ENCODE measurements at regions of chr18 and their contacts with region 1.

Region 1: GRCh38 chr18:47748847-47749599 is 181.4 kb downstream of the SMAD2 start:
- DNase-seq: peak; percentile 73 to 82 (median 79)
- ATAC-seq: peak; percentile 99
- H3K4me3 ChIP-seq: no peak overlapping the region
- H3K27ac ChIP-seq: no peak overlapping the region
- H3K4me1 ChIP-seq: peaks cover 0 to 4% of the 10 kb centered on the region in 2 experiments; a peak in 2 of 5 replicates
- H3K27me3 ChIP-seq: peaks cover 0 to 6% of the 10 kb centered on the region in 2 experiments; a peak in 1 of 5 replicates
- CTCF ChIP-seq: peak; percentile 80 to 99 (median 99)
- EP300 ChIP-seq: no peak
- POLR2A ChIP-seq: no peak
- RAD21 ChIP-seq: peak; percentile 90 to 97

Region 2: GRCh38 chr18:47100214-47100831 is 648.7 kb before region 1 on chr18:
- CTCF ChIA-PET with region 1: interaction called, 7 read pairs
- POLR2A ChIA-PET with region 1: no interaction called
- in situ Hi-C with region 1: loop called (anchors 10 kb)
- intact Hi-C with region 1: no loop called
- DNase-seq: peak; percentile 41 to 65 (median 48)
- ATAC-seq: peak; percentile 93
- H3K4me3 ChIP-seq: no peak overlapping the region
- H3K27ac ChIP-seq: no peak overlapping the region
- H3K4me1 ChIP-seq: no peaks in the 10 kb centered on the region
- H3K27me3 ChIP-seq: no peaks in the 10 kb centered on the region
- CTCF ChIP-seq: peak; percentile 75 to 80 (median 79)
- EP300 ChIP-seq: no peak
- POLR2A ChIP-seq: no peak
- RAD21 ChIP-seq: peak; percentile 72 to 88

Region 3: DNA sequence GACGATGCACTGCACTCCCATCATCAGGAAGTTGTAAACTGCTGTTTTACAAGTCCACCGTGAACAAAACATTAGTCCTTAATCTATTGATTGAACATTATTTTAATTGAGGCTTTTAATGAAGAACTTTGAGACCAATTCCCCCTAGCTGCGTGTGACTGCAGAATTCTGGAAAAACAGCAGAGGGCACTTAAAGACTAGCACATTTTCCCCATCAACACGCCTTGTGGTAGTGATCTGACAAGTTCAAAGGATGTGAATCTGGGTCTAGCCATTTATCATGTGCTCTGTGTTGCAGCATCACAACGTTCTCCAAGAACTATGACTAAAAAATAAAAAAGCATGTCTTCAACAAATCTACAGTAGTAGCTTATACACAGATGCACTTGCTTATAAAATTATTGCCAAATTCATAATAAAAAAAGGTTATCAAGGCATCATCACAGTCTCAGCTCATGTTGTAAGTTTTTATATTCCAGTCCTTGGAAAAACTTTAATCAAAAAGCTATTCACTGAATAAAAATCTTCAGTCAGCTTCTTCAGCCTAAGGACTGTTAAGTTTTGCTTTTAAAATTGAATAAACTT is 533.4 kb before region 1 on chr18:
- CTCF ChIA-PET with region 1: interaction called, 25 read pairs
- POLR2A ChIA-PET with region 1: no interaction called
- in situ Hi-C with region 1: loop called (anchors 5 kb)
- intact Hi-C with region 1: loop called (anchors 2 kb)
- DNase-seq: peak; percentile 11 to 37 (median 14)
- ATAC-seq: peak; percentile 58; the same call in 1 of the 3 replicates
- H3K4me3 ChIP-seq: no peak overlapping the region
- H3K27ac ChIP-seq: no peak overlapping the region
- H3K4me1 ChIP-seq: no peaks in the 10 kb centered on the region
- H3K27me3 ChIP-seq: no peaks in the 10 kb centered on the region
- CTCF ChIP-seq: peak; percentile 58 to 72 (median 71)
- EP300 ChIP-seq: no peak
- POLR2A ChIP-seq: no peak
- RAD21 ChIP-seq: peak; percentile 68 to 80

Region 4: GRCh38 chr18:47595815-47596496 is 153.1 kb before region 1 on chr18:
- CTCF ChIA-PET with region 1: interaction called, 18 read pairs
- POLR2A ChIA-PET with region 1: no interaction called
- in situ Hi-C with region 1: loop called (anchors 10 kb)
- intact Hi-C with region 1: loop called (anchors 1 kb)
- DNase-seq: peak; percentile 35 to 53 (median 49)
- ATAC-seq: peak; percentile 71
- H3K4me3 ChIP-seq: no peak overlapping the region
- H3K27ac ChIP-seq: no peak overlapping the region
- H3K4me1 ChIP-seq: no peaks in the 10 kb centered on the region
- H3K27me3 ChIP-seq: peaks cover 0 to 6% of the 10 kb centered on the region in 2 experiments; a peak in 2 of 5 replicates
- CTCF ChIP-seq: peak; percentile 59 to 70 (median 66)
- EP300 ChIP-seq: no peak
- POLR2A ChIP-seq: no peak
- RAD21 ChIP-seq: peak in 1 of 2 experiments; percentile 49; a peak in 2 of 4 replicates

Region 5: GRCh38 chr18:47709556-47709955 is 39.5 kb before region 1 on chr18:
- CTCF ChIA-PET with region 1: no interaction called
- POLR2A ChIA-PET with region 1: no interaction called
- in situ Hi-C with region 1: no loop called
- intact Hi-C with region 1: no loop called
- DNase-seq: no peak
- ATAC-seq: no peak
- H3K4me3 ChIP-seq: no peak overlapping the region
- H3K27ac ChIP-seq: no peak overlapping the region
- H3K4me1 ChIP-seq: no peaks in the 10 kb centered on the region
- H3K27me3 ChIP-seq: no peaks in the 10 kb centered on the region
- CTCF ChIP-seq: no peak
- EP300 ChIP-seq: no peak
- POLR2A ChIP-seq: no peak
- RAD21 ChIP-seq: no peak

Region 6: DNA sequence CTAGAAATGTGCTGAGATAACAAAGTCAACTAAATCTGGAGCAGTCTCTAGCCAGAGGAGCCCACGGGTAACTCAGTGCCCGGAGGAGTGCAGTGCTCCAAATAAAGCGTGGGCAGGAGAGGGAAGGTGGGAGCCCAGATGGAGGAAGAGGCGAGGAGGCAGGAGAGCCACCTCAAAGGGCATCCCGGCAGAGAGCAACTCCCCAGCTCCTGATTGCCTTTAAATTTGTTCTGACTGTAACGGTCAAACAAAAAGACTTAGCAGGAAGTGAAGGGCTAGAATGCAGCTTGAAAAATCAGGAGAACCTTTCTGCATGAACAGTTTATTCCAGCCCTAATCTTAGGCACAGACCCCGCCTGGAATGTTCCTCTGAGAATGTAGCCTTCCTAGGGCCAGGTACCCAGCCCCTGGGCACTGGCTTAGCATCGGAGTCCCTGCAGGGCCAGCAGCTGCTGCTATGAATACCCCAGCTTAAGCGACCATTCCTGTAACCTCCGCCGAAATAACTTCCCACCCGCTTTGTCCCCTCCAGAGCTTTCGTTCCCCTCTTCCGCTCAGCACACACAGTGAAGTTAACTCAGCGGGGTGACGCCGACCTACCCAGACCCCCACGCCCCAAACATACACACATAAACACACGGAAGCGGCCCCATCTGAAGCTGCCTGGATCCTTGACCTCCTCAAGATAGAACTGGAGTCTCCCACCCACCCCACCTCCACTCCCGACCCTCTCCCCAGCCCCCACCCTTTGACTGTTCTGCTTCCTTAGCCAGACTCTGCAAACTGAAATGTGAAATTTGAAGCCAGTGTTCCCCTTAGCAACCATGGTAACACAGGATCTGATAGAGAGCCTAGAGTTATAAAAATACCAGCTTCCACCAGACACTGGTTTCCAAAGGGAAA is 1078.5 kb after region 1 on chr18:
- CTCF ChIA-PET with region 1: no interaction called
- POLR2A ChIA-PET with region 1: no interaction called
- in situ Hi-C with region 1: no loop called
- intact Hi-C with region 1: no loop called
- DNase-seq: peak in 1 of 4 experiments; percentile 44
- ATAC-seq: peak; percentile 57
- H3K4me3 ChIP-seq: no peak overlapping the region
- H3K27ac ChIP-seq: no peak overlapping the region; the same call in 2 of the 3 replicates
- H3K4me1 ChIP-seq: peaks cover 28 to 41% of the 10 kb centered on the region in 2 experiments
- H3K27me3 ChIP-seq: no peaks in the 10 kb centered on the region
- CTCF ChIP-seq: no peak
- EP300 ChIP-seq: no peak
- POLR2A ChIP-seq: no peak
- RAD21 ChIP-seq: no peak